ENCODE measurements at regions of chr2 and their contacts with region 1.

Region 1: GRCh38 chr2:17171446-17172049 is 346.7 kb downstream of the RAD51AP2 start:
- DNase-seq: peak; percentile 68
- ATAC-seq: peak; percentile 100
- H3K4me3 Mint-ChIP-seq: no peak overlapping the region
- H3K27ac Mint-ChIP-seq: no peak overlapping the region
- H3K4me1 Mint-ChIP-seq: peaks cover 11% of the 10 kb centered on the region
- H3K27me3 Mint-ChIP-seq: no peaks in the 10 kb centered on the region
- CTCF ChIP-seq: peak; percentile 65

Region 2: DNA sequence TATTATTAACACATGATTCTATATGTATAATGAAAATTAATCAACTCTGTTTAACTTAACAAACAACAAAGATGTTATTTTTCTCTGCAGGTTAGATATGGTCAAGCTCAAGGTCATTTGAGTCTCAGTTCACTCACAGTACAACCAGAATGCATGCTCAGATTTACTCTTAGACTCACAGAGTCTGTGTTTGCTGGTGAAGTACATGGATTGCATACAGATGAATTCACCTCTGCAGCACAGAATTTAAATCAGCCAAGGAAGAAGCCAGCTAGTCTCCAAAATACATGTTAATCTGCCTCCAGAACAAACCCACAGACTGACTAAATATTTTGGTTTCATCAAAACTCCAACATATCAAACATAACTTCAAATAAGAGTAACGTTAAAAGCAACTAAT is 77.8 kb before region 1 on chr2:
- CTCF ChIA-PET with region 1: no interaction called
- POLR2A ChIA-PET with region 1: no interaction called
- DNase-seq: no peak
- ATAC-seq: no peak
- H3K4me3 Mint-ChIP-seq: no peak overlapping the region
- H3K27ac Mint-ChIP-seq: no peak overlapping the region
- H3K4me1 Mint-ChIP-seq: peaks cover 9% of the 10 kb centered on the region
- H3K27me3 Mint-ChIP-seq: no peaks in the 10 kb centered on the region
- CTCF ChIP-seq: no peak

Region 3: DNA sequence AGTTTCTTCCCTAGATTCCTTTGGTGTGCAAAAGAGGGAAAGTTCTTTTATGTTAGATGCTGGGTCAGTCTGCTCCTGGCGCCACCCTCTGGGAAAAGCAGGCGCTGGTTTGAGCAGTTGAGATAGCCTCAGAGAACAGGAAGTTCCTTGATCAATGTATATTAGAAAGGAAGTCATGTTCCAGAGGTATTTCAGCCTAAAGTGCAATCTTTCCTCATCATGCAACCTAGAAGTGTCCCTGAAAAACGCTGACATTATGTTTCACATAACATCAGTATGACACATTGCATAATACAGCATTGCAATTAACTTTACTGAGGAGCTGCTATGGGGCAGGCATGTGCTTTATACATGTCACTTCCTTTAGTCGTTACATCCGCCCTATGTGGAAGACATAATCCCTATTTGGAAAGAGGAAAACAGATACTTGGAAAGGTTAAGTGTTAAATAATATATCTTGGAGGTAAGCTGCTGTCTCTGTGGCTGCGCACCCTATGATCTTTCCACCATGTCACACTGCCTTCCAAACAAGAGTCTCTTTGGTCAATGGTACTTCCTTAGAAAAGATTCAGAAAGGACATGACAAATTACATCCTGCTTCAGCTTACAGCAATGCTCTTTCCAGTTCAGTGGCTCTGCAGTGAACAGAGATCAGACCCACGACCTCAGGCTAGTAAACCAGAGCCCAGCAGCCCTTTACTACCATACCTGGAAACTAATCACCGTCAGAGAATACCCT is 23.0 kb before region 1 on chr2:
- CTCF ChIA-PET with region 1: interaction called, 11 read pairs
- POLR2A ChIA-PET with region 1: no interaction called
- DNase-seq: peak; percentile 55
- ATAC-seq: peak; percentile 92
- H3K4me3 Mint-ChIP-seq: no peak overlapping the region
- H3K27ac Mint-ChIP-seq: no peak overlapping the region
- H3K4me1 Mint-ChIP-seq: peaks cover 37% of the 10 kb centered on the region
- H3K27me3 Mint-ChIP-seq: no peaks in the 10 kb centered on the region
- CTCF ChIP-seq: no peak

Region 4: GRCh38 chr2:17309741-17310339 is 138.3 kb after region 1 on chr2:
- CTCF ChIA-PET with region 1: interaction called, 14 read pairs
- POLR2A ChIA-PET with region 1: no interaction called
- DNase-seq: peak; percentile 69
- ATAC-seq: peak; percentile 92
- H3K4me3 Mint-ChIP-seq: no peak overlapping the region
- H3K27ac Mint-ChIP-seq: no peak overlapping the region
- H3K4me1 Mint-ChIP-seq: peaks cover 28% of the 10 kb centered on the region
- H3K27me3 Mint-ChIP-seq: no peaks in the 10 kb centered on the region; the same call in 1 of the 2 replicates
- CTCF ChIP-seq: peak; percentile 68